HepG2 (cell line): ENCODE measurements at regions of chr5 and their contacts with region 1.

Region 1: GRCh38 chr5:32916648-32917047 is 205.5 kb downstream of the NPR3 start:
- DNase-seq: peak; percentile 33
- ATAC-seq: peak; percentile 73
- H3K4me3 ChIP-seq: no peak overlapping the region
- H3K27ac ChIP-seq: no peak overlapping the region
- H3K4me1 ChIP-seq: no peaks in the 10 kb centered on the region
- H3K27me3 ChIP-seq: no peaks in the 10 kb centered on the region
- CTCF ChIP-seq: peak; percentile 70
- EP300 ChIP-seq: no peak
- POLR2A ChIP-seq: no peak
- RAD21 ChIP-seq: 0 out of 2 replicates have a peak, but pooled peaks have one; percentile 29

Region 2: DNA sequence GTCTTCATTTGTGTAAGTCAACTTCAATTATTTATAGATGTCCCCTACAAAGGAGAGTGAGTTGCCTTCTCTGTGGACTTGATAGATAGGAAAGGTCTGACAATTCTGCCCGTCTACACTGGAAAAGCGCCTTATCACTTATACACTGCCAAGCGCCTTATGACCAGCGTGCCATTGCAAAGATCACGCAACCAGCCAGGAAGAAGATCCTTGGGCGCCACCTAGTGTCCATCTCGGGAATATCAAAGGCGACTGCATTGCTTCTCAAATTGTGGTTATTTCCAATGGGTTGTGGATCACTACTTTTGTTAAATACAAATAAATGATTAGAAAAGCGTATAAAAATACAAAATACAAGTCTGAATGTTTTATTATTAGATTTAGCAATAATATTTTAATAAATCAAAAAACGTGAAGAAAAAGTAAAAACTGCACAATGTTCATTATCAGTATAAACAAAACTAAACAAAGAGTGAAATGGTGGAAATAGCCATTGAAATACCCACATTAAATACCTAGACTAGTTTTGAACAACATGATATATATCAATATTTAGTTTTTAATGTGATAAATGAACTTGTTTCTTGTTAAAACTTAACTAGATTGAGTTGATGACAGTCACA is 303.5 kb before region 1 on chr5:
- CTCF ChIA-PET with region 1: no interaction called
- POLR2A ChIA-PET with region 1: no interaction called
- in situ Hi-C with region 1: no loop called
- intact Hi-C with region 1: loop called (anchors 10 kb)
- DNase-seq: peak; percentile 66
- ATAC-seq: peak; percentile 65
- H3K4me3 ChIP-seq: no peak overlapping the region
- H3K27ac ChIP-seq: no peak overlapping the region
- H3K4me1 ChIP-seq: no peaks in the 10 kb centered on the region
- H3K27me3 ChIP-seq: no peaks in the 10 kb centered on the region
- CTCF ChIP-seq: peak; percentile 89
- EP300 ChIP-seq: 0 out of 4 replicates have a peak, but pooled peaks of 1 of the 2 experiments have one; percentile 8
- POLR2A ChIP-seq: no peak
- RAD21 ChIP-seq: peak; percentile 86

Region 3: GRCh38 chr5:32690153-32690552 is 226.5 kb before region 1 on chr5:
- CTCF ChIA-PET with region 1: no interaction called
- POLR2A ChIA-PET with region 1: no interaction called
- in situ Hi-C with region 1: no loop called
- intact Hi-C with region 1: loop called (anchors 5 kb)
- DNase-seq: peak; percentile 3
- ATAC-seq: peak; percentile 71
- H3K4me3 ChIP-seq: no peak overlapping the region
- H3K27ac ChIP-seq: no peak overlapping the region
- H3K4me1 ChIP-seq: no peaks in the 10 kb centered on the region
- H3K27me3 ChIP-seq: no peaks in the 10 kb centered on the region; a peak in 1 of 5 replicates
- CTCF ChIP-seq: peak; percentile 42
- EP300 ChIP-seq: no peak
- POLR2A ChIP-seq: no peak
- RAD21 ChIP-seq: no peak